A549 (cell line): ENCODE measurements at regions of chr19 and their contacts with region 1.

Region 1: GRCh38 chr19:40633207-40633606 is 32.0 kb downstream of the LTBP4 start:
- DNase-seq: no peak
- ATAC-seq: 0 out of 6 replicates have a peak, but pooled peaks of 1 of the 2 experiments have one; percentile 21
- H3K4me3 ChIP-seq: no peak overlapping the region
- H3K27ac ChIP-seq: no peak overlapping the region
- H3K4me1 ChIP-seq: peaks cover 7% of the 10 kb centered on the region
- CTCF ChIP-seq: no peak
- EP300 ChIP-seq: no peak
- POLR2A ChIP-seq: no peak
- RAD21 ChIP-seq: no peak

Region 2: DNA sequence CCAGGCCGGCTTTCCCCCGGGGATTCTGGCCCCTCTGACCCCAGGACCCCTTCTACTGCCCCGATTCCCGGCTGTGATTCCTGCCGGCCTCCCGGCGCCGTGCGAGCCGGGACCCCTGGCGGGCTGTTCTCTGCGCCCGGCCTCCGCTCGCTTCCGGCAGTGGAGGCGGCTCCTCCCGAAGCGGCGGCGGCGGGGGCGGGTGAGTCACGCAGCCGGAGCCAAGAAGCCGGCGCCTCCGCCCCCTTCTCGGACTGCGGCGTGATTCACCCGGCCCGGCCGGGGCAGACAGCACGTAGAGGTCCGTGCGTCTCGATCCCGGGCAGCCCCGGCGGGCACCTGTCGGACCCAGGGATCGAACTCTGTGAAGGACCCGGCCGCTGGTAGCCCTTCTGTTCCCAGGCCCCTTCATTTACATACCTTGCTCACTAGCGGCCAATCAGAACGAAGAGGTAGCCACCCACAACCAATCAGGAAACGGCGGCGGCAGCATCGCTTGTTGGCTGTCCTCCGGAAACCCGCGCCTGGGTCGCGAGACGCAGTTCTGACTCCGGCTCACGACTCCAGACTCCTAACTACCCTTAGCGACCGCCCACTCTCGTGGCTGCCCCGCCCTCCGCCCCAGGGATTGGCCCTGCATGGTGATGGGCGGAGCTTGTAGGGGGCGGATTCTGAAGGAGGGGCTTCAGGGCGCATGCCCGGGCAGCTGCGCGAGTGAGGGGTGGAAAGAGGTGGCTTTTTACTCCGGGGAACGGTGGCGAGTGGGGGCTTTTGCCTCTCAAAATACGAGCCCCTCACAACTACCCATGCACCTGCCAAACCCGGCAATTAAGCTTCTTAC is 207.5 kb before region 1 on chr19 and contains the start of gene SERTAD1:
- CTCF ChIA-PET with region 1: interaction called, 11 read pairs
- POLR2A ChIA-PET with region 1: no interaction called
- DNase-seq: peak; percentile 100
- ATAC-seq: peak; percentile 78 to 85
- H3K4me3 ChIP-seq: peak within 1 kb of the TSS; percentile 66
- H3K27ac ChIP-seq: peak within 1 kb of the TSS; percentile 93 to 94
- H3K4me1 ChIP-seq: peaks cover 25% of the 10 kb centered on the region
- CTCF ChIP-seq: peak; percentile 100
- EP300 ChIP-seq: no peak; a peak in 1 of 5 replicates
- POLR2A ChIP-seq: peak; percentile 99
- RAD21 ChIP-seq: peak; percentile 11 to 73; a peak in 4 of 5 replicates
- polyA plus RNA-seq, gene SERTAD1: 10.0 and 10.7 TPM in 2 replicates

Region 3: DNA sequence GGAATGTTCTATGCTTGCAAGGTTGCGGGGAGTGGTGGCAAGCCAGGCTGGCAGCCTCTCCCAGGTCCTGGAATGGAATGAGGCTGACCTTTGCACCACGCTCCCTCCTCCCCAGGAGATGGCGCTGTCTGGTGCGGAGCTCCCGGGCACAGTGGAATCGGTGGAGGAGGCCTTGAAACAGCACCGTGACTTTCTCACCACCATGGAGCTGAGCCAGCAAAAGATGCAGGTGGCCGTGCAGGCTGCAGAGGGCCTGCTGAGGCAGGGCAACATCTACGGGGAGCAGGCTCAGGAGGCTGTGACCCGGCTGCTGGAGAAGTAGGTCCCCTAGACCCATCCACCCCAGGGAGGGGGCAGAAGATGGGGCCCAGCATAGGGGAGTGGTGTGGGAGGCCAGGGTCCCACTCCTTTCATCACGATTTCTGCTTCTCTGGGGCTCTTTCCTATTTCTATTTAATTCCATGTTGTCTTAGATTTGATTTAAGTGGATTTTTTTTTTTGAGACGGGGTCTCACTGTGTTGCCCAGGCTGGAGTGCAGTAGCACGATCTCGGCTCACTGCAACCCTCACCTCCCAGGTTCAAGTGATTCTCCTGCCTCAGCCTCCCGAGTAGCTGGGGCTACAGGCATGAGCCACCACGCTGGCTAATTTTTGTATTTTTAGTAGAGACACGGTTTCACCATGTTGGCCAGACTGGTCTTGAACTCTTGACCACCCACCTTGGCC is 109.7 kb before region 1 on chr19:
- CTCF ChIA-PET with region 1: interaction called, 35 read pairs
- POLR2A ChIA-PET with region 1: interaction called, 3 read pairs
- DNase-seq: peak; percentile 93 to 96
- ATAC-seq: peak; percentile 80 to 90
- H3K4me3 ChIP-seq: peak overlapping the region; percentile 9; the same call in 2 of the 3 replicates
- H3K27ac ChIP-seq: peak overlapping the region; percentile 57 to 73
- H3K4me1 ChIP-seq: peaks cover 21% of the 10 kb centered on the region
- CTCF ChIP-seq: peak; percentile 92
- EP300 ChIP-seq: no peak
- POLR2A ChIP-seq: no peak
- RAD21 ChIP-seq: peak; percentile 62 to 73

Region 4: GRCh38 chr19:40576585-40577451 is 56.4 kb before region 1 on chr19 and contains the start of gene SHKBP1:
- CTCF ChIA-PET with region 1: interaction called, 53 read pairs
- POLR2A ChIA-PET with region 1: no interaction called
- DNase-seq: peak; percentile 99 to 100
- ATAC-seq: peak; percentile 94 to 99
- H3K4me3 ChIP-seq: peak within 1 kb of the TSS; percentile 65
- H3K27ac ChIP-seq: peak within 1 kb of the TSS; percentile 85 to 91
- H3K4me1 ChIP-seq: peaks cover 15% of the 10 kb centered on the region
- CTCF ChIP-seq: no peak
- EP300 ChIP-seq: no peak
- POLR2A ChIP-seq: peak; percentile 45
- RAD21 ChIP-seq: no peak
- polyA plus RNA-seq, gene SHKBP1: 75.2 and 79.7 TPM in 2 replicates

Region 5: DNA sequence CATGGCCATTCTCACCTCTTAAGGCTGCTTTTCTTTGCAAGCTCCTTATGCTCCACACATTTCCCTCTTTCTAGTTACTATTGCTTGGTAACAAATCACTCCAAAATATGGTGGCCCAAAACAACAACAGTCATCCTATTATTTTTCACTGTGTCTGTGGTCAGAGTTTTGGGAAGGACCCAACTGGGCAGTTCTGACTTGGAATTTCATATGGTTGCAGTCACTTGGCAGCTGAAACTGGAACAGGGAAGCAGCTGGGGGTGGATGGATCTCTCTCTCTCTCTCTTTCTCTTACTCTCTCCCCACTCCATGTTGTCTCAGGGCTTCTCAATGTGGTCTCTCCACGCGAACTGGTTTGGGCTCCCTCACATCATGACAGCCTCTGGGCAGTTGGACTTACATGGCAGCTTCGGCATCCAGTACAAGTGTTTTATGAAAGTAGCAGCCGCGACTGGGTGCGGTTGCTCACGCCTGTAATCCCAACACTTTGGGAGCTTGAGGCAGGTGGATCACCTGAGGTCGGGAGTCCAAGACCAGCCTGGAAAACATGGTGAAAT is 17.6 kb after region 1 on chr19:
- CTCF ChIA-PET with region 1: interaction called, 195 read pairs
- POLR2A ChIA-PET with region 1: interaction called, 11 read pairs
- DNase-seq: no peak
- ATAC-seq: no peak
- H3K4me3 ChIP-seq: no peak overlapping the region
- H3K27ac ChIP-seq: no peak overlapping the region
- H3K4me1 ChIP-seq: peaks cover 11% of the 10 kb centered on the region
- CTCF ChIP-seq: no peak
- EP300 ChIP-seq: no peak
- POLR2A ChIP-seq: no peak
- RAD21 ChIP-seq: no peak

Region 6: GRCh38 chr19:40702337-40703012 is 69.3 kb after region 1 on chr19:
- CTCF ChIA-PET with region 1: interaction called, 13 read pairs
- POLR2A ChIA-PET with region 1: no interaction called
- DNase-seq: peak; percentile 82 to 84
- ATAC-seq: peak; percentile 88 to 96
- H3K4me3 ChIP-seq: no peak overlapping the region
- H3K27ac ChIP-seq: peak overlapping the region in 1 of 2 experiments; percentile 44; a peak in 3 of 6 replicates
- H3K4me1 ChIP-seq: peaks cover 8% of the 10 kb centered on the region; the same call in 2 of the 3 replicates
- CTCF ChIP-seq: peak; percentile 69
- EP300 ChIP-seq: no peak
- POLR2A ChIP-seq: no peak
- RAD21 ChIP-seq: peak; percentile 71 to 83

Region 7: GRCh38 chr19:40889366-40889765 is 256.2 kb after region 1 on chr19:
- CTCF ChIA-PET with region 1: no interaction called
- POLR2A ChIA-PET with region 1: no interaction called
- DNase-seq: no peak
- ATAC-seq: peak in 1 of 2 experiments; percentile 53; a peak in 3 of 6 replicates
- H3K4me3 ChIP-seq: no peak overlapping the region
- H3K27ac ChIP-seq: peak overlapping the region in 1 of 2 experiments; percentile 14; a peak in 1 of 6 replicates
- H3K4me1 ChIP-seq: 0 out of 3 replicates have a peak, but pooled peaks cover 9% of the 10 kb centered on the region
- CTCF ChIP-seq: no peak
- EP300 ChIP-seq: no peak
- POLR2A ChIP-seq: no peak
- RAD21 ChIP-seq: no peak